ENCODE measurements at regions of chr7 and their contacts with region 1.

Region 1: GRCh38 chr7:77759294-77759889 is 38.8 kb downstream of the TMEM60 start:
- DNase-seq: peak; percentile 74
- ATAC-seq: peak; percentile 58
- H3K4me3 Mint-ChIP-seq: no peak overlapping the region
- H3K27ac Mint-ChIP-seq: no peak overlapping the region
- H3K4me1 Mint-ChIP-seq: peaks cover 20% of the 10 kb centered on the region
- H3K27me3 Mint-ChIP-seq: no peaks in the 10 kb centered on the region

Region 2: DNA sequence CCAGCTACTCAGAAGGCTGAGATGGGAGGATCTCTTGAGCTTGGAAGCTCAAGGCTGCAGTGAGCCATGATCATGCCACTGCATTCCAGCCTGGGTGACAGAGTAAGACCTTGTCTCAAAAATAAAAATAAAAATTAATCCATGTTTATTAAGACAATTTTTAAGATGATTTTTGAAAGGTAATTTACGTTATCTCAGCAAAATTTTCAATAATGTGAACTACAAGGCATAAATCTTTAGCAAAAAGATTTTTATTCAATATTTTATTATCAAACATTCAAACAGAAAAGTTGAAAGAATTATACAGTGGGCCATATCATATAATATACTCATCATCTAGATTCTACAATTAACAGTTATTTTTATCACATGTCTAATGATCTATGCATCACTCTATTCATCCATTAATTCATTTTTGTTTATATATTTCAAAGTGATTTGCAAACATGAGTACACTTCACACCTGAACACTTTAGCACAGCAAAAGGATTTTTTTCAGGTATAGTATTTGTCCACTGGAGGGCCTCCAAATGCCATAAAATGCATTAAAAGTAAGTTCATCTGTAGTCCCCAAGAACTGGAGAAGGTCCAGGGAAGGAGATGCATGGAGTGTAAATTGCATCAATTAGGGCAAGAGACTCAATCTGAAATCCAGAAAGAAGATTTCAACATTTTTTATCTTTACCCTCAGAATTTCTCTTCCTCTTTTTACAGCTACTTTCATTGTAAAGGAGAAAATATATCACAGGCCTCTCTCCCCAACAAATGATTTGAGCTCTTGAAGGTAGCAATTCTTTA is 101.8 kb before region 1 on chr7:
- CTCF ChIA-PET with region 1: interaction called, 51 read pairs
- DNase-seq: no peak
- ATAC-seq: no peak
- H3K4me3 Mint-ChIP-seq: no peak overlapping the region
- H3K27ac Mint-ChIP-seq: no peak overlapping the region
- H3K4me1 Mint-ChIP-seq: no peaks in the 10 kb centered on the region
- H3K27me3 Mint-ChIP-seq: no peaks in the 10 kb centered on the region

Region 3: DNA sequence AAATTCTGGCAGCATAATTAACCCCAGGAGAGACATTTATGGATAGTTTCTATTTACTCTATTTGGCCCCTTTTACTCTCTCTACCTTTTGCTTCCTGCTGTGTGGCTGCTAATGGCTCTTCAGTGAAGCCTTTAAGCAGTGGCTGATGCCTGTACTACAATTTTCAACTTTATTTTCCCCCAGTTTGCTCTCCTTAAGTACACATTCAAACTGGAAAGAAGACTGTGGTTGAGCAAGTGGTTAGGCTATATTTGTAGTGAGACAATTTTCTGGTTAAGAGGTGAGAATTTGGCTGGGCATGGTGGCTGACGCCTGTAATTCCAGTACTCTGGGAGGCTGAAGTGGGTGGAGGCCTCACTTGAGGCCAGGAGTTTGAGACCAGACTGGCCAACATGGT is 71.6 kb before region 1 on chr7:
- CTCF ChIA-PET with region 1: interaction called, 13 read pairs
- DNase-seq: peak; percentile 67
- ATAC-seq: peak; percentile 84
- H3K4me3 Mint-ChIP-seq: peak overlapping the region; percentile 53
- H3K27ac Mint-ChIP-seq: peak overlapping the region; percentile 81
- H3K4me1 Mint-ChIP-seq: peaks cover 23% of the 10 kb centered on the region
- H3K27me3 Mint-ChIP-seq: no peaks in the 10 kb centered on the region

Measured in activated CD8-positive, alpha-beta memory T cell treated with anti-CD3 and anti-CD28 coated beads, Interleukin-2, amount 10 ng/mL, durations not matched to agents 7 days and 5 days (primary cell).